Vagina (tissue), 2 donors: ENCODE measurements at regions of chr1 and their contacts with region 1.

Region 1: DNA sequence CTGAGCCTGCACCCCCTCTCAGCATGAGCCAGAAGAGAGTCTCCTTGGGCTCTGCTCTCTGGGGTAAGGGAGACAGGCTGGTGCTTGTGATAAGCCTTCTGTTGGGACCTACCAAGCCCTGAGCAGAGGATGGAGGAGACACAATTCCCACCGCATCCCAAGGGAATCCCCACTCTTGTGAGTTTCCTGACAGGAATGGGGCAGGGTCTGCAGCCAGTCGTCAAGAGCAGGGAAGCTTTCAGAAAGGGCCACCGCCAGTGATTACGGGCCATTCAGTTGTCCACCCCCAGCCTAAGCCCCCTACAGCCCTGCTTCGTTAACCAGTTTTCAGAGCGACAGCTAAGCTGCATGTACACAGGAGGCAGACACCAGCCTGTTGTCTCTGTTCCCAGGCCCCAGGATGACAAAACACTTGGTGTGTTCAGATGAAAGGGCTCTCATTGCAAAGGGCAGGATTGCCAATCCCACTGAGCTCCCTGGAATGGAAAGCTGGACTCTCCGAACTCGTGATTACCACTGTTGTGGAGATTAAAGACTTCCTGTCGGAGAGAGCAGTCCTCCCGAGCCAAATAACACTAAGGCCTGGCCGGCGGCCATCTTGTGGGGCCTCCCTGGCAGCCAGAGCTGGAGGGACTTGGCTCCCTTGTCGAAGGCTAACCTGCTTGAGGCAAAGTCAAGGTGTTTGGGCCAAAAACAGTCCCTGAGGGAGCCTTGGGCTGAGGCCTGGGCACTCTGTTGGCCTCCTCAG is 37.4 kb upstream of the SLC30A1 start:
- DNase-seq: no peak
- H3K4me3 ChIP-seq: no peak overlapping the region
- H3K27ac ChIP-seq: no peak overlapping the region
- H3K4me1 ChIP-seq: peaks cover 17% of the 10 kb centered on the region
- H3K27me3 ChIP-seq: no peaks in the 10 kb centered on the region
- CTCF ChIP-seq: no peak
- POLR2A ChIP-seq: no peak

Region 2: GRCh38 chr1:211578640-211579433 is 37.6 kb before region 1 on chr1 and contains the start of gene SLC30A1:
- intact Hi-C with region 1: loop called (anchors 5 kb)
- DNase-seq: peak in 1 of 2 donors; percentile 99
- H3K4me3 ChIP-seq: peak within 1 kb of the TSS; percentile 59 to 78
- H3K27ac ChIP-seq: peak within 1 kb of the TSS; percentile 94
- H3K4me1 ChIP-seq: peaks cover 53% of the 10 kb centered on the region
- H3K27me3 ChIP-seq: no peaks in the 10 kb centered on the region
- CTCF ChIP-seq: peak in 1 of 3 experiments; percentile 19
- POLR2A ChIP-seq: peak; percentile 45 to 88
- total RNA-seq, gene SLC30A1: 19.2 TPM

Region 3: GRCh38 chr1:212205843-212206242 is 589.4 kb after region 1 on chr1:
- intact Hi-C with region 1: no loop called
- DNase-seq: no peak
- H3K4me3 ChIP-seq: no peak overlapping the region
- H3K27ac ChIP-seq: no peak overlapping the region
- H3K4me1 ChIP-seq: no peaks in the 10 kb centered on the region
- H3K27me3 ChIP-seq: no peaks in the 10 kb centered on the region
- CTCF ChIP-seq: no peak
- POLR2A ChIP-seq: no peak